ENCODE measurements at regions of chr10 and their contacts with region 1.

Region 1: DNA sequence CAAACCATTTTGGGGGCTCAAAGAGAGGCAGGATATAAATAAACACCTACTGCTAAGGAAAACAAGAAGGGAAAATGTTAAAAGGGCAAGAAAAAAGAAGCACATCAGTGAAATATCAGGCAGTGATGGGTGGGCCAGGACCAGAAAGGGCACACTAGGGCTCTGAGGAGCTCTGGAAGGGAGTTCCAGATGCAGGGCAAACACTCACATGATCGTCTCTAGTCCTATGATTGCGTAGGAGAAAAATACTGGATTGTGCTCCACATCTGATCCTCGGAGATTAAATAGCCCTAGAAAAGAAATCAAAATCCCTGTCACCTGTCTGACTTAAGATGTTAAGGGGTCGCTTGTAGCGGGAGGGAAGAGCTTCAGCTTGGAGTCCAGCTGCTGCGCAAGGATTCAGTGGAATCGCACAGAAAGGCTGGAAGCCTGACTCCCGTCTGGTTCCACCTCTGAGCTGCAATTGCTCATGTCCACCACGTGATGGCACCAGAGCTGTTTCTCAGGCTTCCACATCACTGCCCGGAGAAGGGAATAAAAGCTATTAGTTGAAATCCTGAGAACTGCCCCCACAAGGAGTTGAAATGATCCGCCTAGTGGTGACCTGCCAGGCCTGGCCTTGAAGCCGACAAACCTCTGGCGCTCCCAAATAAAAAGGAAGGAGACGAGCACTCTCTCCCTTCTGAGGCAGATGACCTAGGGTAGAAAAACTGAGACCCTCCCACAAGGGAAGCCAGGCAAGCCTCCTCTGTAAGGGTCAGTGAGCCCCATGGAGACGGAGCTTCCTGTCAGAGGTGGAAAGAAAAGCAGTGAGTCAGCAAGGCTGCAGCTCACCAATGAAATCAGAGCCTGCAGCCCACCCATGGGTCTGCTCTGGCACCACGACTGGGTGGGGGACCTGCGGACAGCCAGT is 39.2 kb downstream of the XPNPEP1 start:
- DNase-seq: peak; percentile 33 to 66 (median 51)
- ATAC-seq: peak; percentile 88
- H3K4me3 ChIP-seq: no peak overlapping the region
- H3K4me3 Mint-ChIP-seq: no peak overlapping the region
- H3K27ac ChIP-seq: no peak overlapping the region
- H3K27ac Mint-ChIP-seq: peak overlapping the region in 3 of 9 donors; percentile 9 to 25 (median 22)
- H3K4me1 ChIP-seq: no peaks in the 10 kb centered on the region
- H3K4me1 Mint-ChIP-seq: peaks cover 5 to 19% (median 9%) of the 10 kb centered on the region in 7 donors
- H3K27me3 ChIP-seq: no peaks in the 10 kb centered on the region
- H3K27me3 Mint-ChIP-seq: no peaks in the 10 kb centered on the region

Region 2: DNA sequence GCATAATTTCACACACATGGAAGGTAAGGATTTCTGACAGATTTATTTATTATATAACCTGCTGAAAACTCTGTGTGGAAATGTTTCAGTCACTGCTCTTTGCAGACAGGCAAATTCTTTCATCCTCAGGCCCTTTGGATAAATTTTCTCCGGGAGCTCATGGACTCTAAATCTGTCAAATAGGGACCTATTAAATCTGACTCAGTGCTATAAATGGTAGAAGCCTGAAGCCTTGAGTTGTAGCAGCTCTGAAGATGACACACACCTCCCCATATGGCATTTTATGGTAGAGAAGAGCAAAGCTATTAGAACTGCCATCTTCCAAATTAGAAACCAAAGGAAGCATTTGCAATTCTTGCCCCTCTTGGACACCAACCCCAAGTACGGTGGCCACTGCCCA is 769.5 kb before region 1 on chr10:
- CTCF ChIA-PET with region 1: no interaction called
- POLR2A ChIA-PET with region 1: no interaction called
- intact Hi-C with region 1: no loop called
- DNase-seq: no peak
- ATAC-seq: no peak
- H3K4me3 ChIP-seq: no peak overlapping the region
- H3K4me3 Mint-ChIP-seq: no peak overlapping the region
- H3K27ac ChIP-seq: no peak overlapping the region
- H3K27ac Mint-ChIP-seq: no peak overlapping the region
- H3K4me1 ChIP-seq: no peaks in the 10 kb centered on the region
- H3K4me1 Mint-ChIP-seq: no peaks in the 10 kb centered on the region
- H3K27me3 ChIP-seq: no peaks in the 10 kb centered on the region
- H3K27me3 Mint-ChIP-seq: no peaks in the 10 kb centered on the region

Region 3: DNA sequence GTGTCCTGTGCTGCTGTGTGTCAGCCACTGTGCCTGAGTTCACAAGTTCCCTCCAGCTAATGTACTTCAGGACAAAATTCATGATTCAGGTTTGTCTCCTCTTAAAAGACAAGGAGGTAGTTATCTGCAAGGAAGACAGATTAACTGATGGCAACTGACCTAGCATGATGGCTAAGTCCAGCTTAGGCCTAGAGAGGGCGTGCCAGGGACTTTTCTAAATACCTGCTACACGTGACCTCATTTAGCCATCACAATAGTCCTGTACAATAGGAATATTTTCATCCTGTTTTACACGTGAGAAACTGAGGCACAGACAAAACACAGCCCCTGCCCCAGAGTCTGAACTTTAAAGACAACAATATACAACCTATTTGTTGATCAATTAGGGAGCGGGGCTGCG is 236.5 kb before region 1 on chr10:
- CTCF ChIA-PET with region 1: no interaction called
- POLR2A ChIA-PET with region 1: no interaction called
- intact Hi-C with region 1: no loop called
- DNase-seq: no peak
- ATAC-seq: no peak
- H3K4me3 ChIP-seq: no peak overlapping the region
- H3K4me3 Mint-ChIP-seq: no peak overlapping the region
- H3K27ac ChIP-seq: no peak overlapping the region
- H3K27ac Mint-ChIP-seq: no peak overlapping the region
- H3K4me1 ChIP-seq: no peaks in the 10 kb centered on the region
- H3K4me1 Mint-ChIP-seq: no peaks in the 10 kb centered on the region
- H3K27me3 ChIP-seq: no peaks in the 10 kb centered on the region
- H3K27me3 Mint-ChIP-seq: peaks cover 0 to 10% (median 5%) of the 10 kb centered on the region in 5 donors

Region 4: DNA sequence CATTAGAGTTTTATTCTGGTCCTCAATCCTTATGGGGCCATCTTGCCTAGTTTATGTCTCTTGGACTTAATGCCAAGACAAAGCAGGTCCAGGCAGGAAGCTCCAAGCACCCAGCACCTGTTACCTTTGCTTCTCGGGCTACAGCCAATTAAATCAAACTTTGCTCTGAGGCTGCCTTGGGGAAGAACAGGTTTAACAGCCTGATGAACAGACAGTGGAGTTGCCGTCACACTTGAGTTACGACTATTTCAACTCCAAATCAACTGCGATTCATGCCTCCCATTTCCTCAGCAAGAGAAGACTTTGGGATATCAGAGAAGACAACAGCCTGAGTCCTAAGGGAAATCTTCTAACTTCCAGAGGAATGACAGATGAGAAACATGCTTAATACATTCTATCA is 23.0 kb before region 1 on chr10:
- CTCF ChIA-PET with region 1: no interaction called
- POLR2A ChIA-PET with region 1: no interaction called
- intact Hi-C with region 1: no loop called
- DNase-seq: no peak
- ATAC-seq: no peak
- H3K4me3 ChIP-seq: no peak overlapping the region
- H3K4me3 Mint-ChIP-seq: no peak overlapping the region
- H3K27ac ChIP-seq: no peak overlapping the region
- H3K27ac Mint-ChIP-seq: peak overlapping the region in 1 of 9 donors; percentile 44
- H3K4me1 ChIP-seq: no peaks in the 10 kb centered on the region
- H3K4me1 Mint-ChIP-seq: peaks cover 0 to 6% (median 0%) of the 10 kb centered on the region in 7 donors
- H3K27me3 ChIP-seq: no peaks in the 10 kb centered on the region
- H3K27me3 Mint-ChIP-seq: no peaks in the 10 kb centered on the region

Region 5: DNA sequence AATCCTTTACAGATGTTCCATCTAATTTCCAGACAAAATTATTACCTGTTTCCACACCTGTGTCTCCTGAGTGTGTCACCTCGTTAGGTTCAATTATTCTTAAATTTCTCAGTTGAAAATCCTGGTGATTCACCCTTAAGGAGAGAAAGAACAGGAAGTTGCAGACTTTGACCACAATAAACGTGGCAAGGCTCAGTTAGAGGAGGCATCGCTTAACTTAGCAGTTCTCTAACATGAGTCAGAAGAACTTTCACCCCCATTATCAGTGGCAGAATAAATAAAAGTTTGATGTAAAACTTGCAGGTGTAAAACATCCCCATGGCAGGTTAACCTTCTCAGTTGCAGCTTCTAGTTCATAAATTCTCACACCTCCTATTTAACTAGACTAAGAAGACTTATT is 30.9 kb after region 1 on chr10:
- CTCF ChIA-PET with region 1: interaction called, 5 read pairs
- POLR2A ChIA-PET with region 1: interaction called, 3 read pairs
- intact Hi-C with region 1: loop called in 1 of 2 experiments (anchors 2 kb)
- DNase-seq: peak in 7 of 9 donors; percentile 37 to 71 (median 56)
- ATAC-seq: peak; percentile 93
- H3K4me3 ChIP-seq: no peak overlapping the region
- H3K4me3 Mint-ChIP-seq: peak overlapping the region; percentile 56 to 78 (median 68)
- H3K27ac ChIP-seq: no peak overlapping the region
- H3K27ac Mint-ChIP-seq: peak overlapping the region in 8 of 9 donors; percentile 40 to 88 (median 58)
- H3K4me1 ChIP-seq: peaks cover 32 to 60% of the 10 kb centered on the region in 2 donors
- H3K4me1 Mint-ChIP-seq: peaks cover 64 to 94% (median 87%) of the 10 kb centered on the region in 7 donors
- H3K27me3 ChIP-seq: no peaks in the 10 kb centered on the region
- H3K27me3 Mint-ChIP-seq: no peaks in the 10 kb centered on the region

Region 6: DNA sequence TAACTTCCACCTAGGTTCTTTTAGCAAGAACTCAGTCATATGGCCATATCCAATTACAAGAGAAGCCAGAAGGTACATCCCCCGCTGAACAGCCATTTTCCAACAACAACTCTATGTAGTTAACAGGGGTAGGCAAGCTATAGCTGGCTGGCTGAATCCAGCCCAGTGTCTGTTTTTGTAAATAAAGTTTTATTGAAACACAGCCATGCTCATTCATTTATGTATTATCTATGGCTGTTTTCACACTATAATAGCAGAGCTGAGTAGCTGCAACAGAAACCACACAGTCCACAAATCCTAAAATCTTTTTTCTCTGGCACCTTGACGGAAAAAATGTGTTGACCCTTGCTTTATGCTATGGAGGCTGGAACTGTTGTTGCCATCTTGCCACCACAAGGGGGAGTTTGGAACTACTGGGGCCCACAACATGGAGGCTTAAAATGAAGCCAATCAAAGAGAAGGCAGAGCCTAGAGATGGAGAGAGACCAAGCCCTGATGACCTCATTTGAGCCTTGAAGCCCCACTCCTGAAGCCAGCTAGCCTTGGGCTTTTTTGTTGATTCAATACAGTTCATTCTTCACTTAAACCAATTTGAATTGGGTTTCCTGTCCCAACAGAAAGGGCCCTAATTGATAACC is 72.5 kb after region 1 on chr10:
- CTCF ChIA-PET with region 1: interaction called, 4 read pairs
- POLR2A ChIA-PET with region 1: no interaction called
- intact Hi-C with region 1: loop called (anchors 1 to 5 kb)
- DNase-seq: peak in 1 of 9 donors; percentile 9
- ATAC-seq: peak; percentile 54
- H3K4me3 ChIP-seq: no peak overlapping the region
- H3K4me3 Mint-ChIP-seq: no peak overlapping the region
- H3K27ac ChIP-seq: no peak overlapping the region
- H3K27ac Mint-ChIP-seq: no peak overlapping the region
- H3K4me1 ChIP-seq: no peaks in the 10 kb centered on the region
- H3K4me1 Mint-ChIP-seq: peaks cover 0 to 15% (median 0%) of the 10 kb centered on the region in 7 donors
- H3K27me3 ChIP-seq: no peaks in the 10 kb centered on the region
- H3K27me3 Mint-ChIP-seq: peaks cover 0 to 18% (median 0%) of the 10 kb centered on the region in 5 donors

Region 7: DNA sequence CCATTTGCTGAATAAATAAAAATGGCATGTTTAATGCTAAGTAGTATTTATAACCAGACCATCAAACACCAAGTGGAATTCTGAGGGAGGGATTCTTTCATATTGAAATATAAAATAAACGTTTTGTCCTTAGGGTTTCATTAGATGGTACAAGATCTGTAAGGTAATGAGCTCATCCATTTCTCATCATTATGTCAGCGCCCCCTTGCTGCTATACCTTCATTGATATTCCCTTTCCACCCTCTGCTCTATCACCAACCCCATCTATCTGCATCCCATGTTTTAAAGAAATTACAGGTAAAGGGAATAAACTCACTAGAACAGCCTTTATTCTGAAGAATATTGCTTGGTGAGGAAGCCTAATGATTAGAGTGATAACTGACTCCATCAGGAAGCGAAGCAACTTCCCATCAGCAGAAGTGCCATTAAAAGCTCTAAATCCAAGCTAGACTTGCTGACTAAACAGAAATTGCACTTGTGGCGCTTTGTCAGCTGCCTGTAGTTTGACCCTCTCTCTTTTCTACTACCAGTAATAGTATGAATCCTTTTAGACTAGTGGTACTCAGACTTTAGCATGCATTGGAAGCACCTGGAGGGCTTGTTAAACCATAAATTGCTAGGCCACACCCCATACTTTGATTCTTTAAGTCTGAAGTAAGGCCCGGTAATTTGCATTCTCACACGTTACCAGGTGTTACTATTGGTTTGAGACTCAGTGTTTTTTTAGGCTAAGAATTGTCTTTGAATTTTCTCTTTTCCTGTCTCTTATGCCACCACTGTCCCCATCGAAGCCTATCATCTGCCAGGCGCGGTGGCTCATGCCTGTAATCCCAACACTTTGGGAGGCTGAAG is 151.2 kb after region 1 on chr10:
- CTCF ChIA-PET with region 1: no interaction called
- POLR2A ChIA-PET with region 1: no interaction called
- intact Hi-C with region 1: no loop called
- DNase-seq: no peak
- ATAC-seq: no peak
- H3K4me3 ChIP-seq: no peak overlapping the region
- H3K4me3 Mint-ChIP-seq: peak overlapping the region in 7 of 10 donors; percentile 2 to 78 (median 35)
- H3K27ac ChIP-seq: no peak overlapping the region
- H3K27ac Mint-ChIP-seq: peak overlapping the region in 7 of 9 donors; percentile 46 to 83 (median 69)
- H3K4me1 ChIP-seq: peaks cover 29 to 64% of the 10 kb centered on the region in 2 donors
- H3K4me1 Mint-ChIP-seq: peaks cover 56 to 98% (median 91%) of the 10 kb centered on the region in 7 donors
- H3K27me3 ChIP-seq: no peaks in the 10 kb centered on the region
- H3K27me3 Mint-ChIP-seq: no peaks in the 10 kb centered on the region

Region 8: GRCh38 chr10:110101464-110102144 is 217.5 kb after region 1 on chr10:
- CTCF ChIA-PET with region 1: interaction called, 4 read pairs
- POLR2A ChIA-PET with region 1: no interaction called
- intact Hi-C with region 1: loop called (anchors 10 kb)
- DNase-seq: no peak
- ATAC-seq: no peak
- H3K4me3 ChIP-seq: no peak overlapping the region
- H3K4me3 Mint-ChIP-seq: no peak overlapping the region
- H3K27ac ChIP-seq: no peak overlapping the region
- H3K27ac Mint-ChIP-seq: peak overlapping the region in 5 of 9 donors; percentile 12 to 84 (median 78)
- H3K4me1 ChIP-seq: peaks cover 0 to 8% of the 10 kb centered on the region in 2 donors
- H3K4me1 Mint-ChIP-seq: peaks cover 28 to 85% (median 68%) of the 10 kb centered on the region in 7 donors
- H3K27me3 ChIP-seq: no peaks in the 10 kb centered on the region
- H3K27me3 Mint-ChIP-seq: no peaks in the 10 kb centered on the region

Region 9: GRCh38 chr10:110279407-110279986 is 395.4 kb after region 1 on chr10:
- CTCF ChIA-PET with region 1: interaction called, 5 read pairs
- POLR2A ChIA-PET with region 1: no interaction called
- intact Hi-C with region 1: loop called (anchors 1 to 2 kb)
- DNase-seq: peak in 7 of 9 donors; percentile 37 to 61 (median 56)
- ATAC-seq: peak; percentile 82
- H3K4me3 ChIP-seq: no peak overlapping the region
- H3K4me3 Mint-ChIP-seq: peak overlapping the region in 5 of 10 donors; percentile 4 to 52 (median 48)
- H3K27ac ChIP-seq: no peak overlapping the region
- H3K27ac Mint-ChIP-seq: peak overlapping the region in 3 of 9 donors; percentile 8 to 59 (median 48)
- H3K4me1 ChIP-seq: peaks cover 0 to 6% of the 10 kb centered on the region in 2 donors
- H3K4me1 Mint-ChIP-seq: peaks cover 14 to 42% (median 21%) of the 10 kb centered on the region in 7 donors
- H3K27me3 ChIP-seq: no peaks in the 10 kb centered on the region
- H3K27me3 Mint-ChIP-seq: peaks cover 0 to 22% (median 0%) of the 10 kb centered on the region in 5 donors

Measured in naive thymus-derived CD4-positive, alpha-beta T cell (primary cell).